Adrenal gland (tissue), 19 donors: ENCODE measurements at regions of chr4 and their contacts with region 1.

Region 1: GRCh38 chr4:25234390-25235370 is 847 bp downstream of the PI4K2B start:
- DNase-seq: peak; percentile 57 to 71 (median 63)
- H3K4me3 ChIP-seq: peak overlapping the region; percentile 20 to 86 (median 78)
- H3K27ac ChIP-seq: peak overlapping the region; percentile 80 to 97 (median 96)
- H3K4me1 ChIP-seq: peaks cover 4 to 10% of the 10 kb centered on the region in 2 donors
- H3K27me3 ChIP-seq: no peaks in the 10 kb centered on the region
- CTCF ChIP-seq: peak; percentile 52 to 75 (median 60)
- POLR2A ChIP-seq: peak; percentile 13 to 56

Region 2: GRCh38 chr4:25172961-25173915 is 61.4 kb before region 1 on chr4:
- intact Hi-C with region 1: loop called in 1 of 2 experiments (anchors 10 kb)
- DNase-seq: peak; percentile 68 to 89 (median 80)
- H3K4me3 ChIP-seq: no peak overlapping the region
- H3K27ac ChIP-seq: peak overlapping the region in 4 of 5 donors; percentile 52 to 83 (median 60)
- H3K4me1 ChIP-seq: peaks cover 12 to 16% of the 10 kb centered on the region in 2 donors
- H3K27me3 ChIP-seq: no peaks in the 10 kb centered on the region
- CTCF ChIP-seq: peak in 3 of 6 experiments; percentile 5 to 22 (median 19)
- POLR2A ChIP-seq: no peak

Region 3: DNA sequence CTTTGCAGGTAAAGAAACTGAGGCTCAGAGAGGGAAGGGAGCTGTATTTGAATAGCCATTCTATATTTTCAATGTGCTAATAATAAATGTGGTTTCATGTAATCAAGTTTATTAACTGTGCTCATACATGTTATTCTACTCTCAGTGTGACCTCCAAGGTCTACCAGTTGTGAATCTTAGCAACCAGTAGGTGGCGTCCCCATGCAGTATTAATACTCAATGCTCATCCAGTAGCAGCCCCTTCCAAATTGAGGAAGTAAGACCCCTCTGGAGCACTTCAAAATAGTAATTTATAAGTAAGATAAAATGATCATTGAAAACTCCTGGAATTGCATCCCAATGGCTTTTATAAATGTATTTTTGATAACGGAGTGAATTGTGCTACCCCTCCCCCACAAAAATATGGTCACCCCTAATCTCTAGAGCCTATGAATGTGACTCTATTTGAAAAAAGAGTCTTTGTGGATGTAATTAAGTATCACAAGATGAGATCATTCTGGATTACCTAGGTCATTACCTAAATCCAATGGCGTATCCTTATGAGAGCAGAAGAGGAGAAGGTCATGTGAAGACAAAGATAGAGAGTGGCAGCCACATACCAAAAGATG is 54.1 kb before region 1 on chr4:
- intact Hi-C with region 1: loop called (anchors 10 kb)
- DNase-seq: peak in 1 of 7 donors; percentile 51
- H3K4me3 ChIP-seq: no peak overlapping the region
- H3K27ac ChIP-seq: no peak overlapping the region
- H3K4me1 ChIP-seq: no peaks in the 10 kb centered on the region
- H3K27me3 ChIP-seq: no peaks in the 10 kb centered on the region
- CTCF ChIP-seq: peak; percentile 49 to 56 (median 50)
- POLR2A ChIP-seq: no peak